Psoas muscle (tissue), 8 donors: ENCODE measurements at regions of chr1 and their contacts with region 1.

Region 1: DNA sequence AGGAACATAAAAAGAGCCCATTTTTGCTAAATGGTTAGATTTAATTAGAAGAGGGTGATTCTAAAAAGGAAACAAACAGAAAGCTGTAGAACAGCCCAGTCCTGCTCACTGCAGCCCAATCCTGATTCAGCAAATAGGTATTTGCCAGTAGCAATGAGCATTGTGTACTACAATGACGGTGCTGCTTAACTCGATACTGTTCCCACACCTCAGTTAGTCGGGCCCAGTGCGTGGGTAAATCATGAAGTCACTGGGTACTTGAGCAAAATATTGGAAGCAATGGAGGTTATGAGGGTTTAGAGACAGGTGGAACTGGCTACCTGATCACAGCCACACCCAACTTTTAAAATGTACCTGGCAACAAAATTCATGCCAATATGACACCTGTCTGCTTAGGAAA is 101.5 kb upstream of the ADGRL2 start:
- DNase-seq: no peak
- ATAC-seq: no peak
- H3K4me3 ChIP-seq: no peak overlapping the region
- H3K27ac ChIP-seq: no peak overlapping the region
- H3K4me1 ChIP-seq: no peaks in the 10 kb centered on the region
- H3K27me3 ChIP-seq: no peaks in the 10 kb centered on the region
- CTCF ChIP-seq: no peak

Region 2: DNA sequence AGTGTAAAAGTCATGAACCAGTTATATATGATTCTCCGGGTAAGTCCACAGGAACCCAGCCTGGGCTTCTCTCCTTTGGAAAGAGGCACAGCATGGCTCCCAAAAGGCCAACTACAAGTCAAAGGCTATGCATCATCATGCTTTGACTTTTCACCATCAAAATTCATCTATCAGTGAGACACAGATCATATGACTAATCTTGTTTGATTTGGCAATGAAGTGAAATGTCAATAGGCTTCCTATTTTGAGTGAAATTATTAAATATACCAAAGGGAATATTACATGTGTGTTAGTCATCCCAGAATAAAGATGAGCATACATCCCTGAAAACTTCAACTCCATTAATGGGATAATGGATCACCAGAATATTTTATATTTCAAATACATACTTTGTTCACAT is 18.0 kb after region 1 on chr1:
- intact Hi-C with region 1: loop called in 1 of 2 experiments (anchors 2 kb)
- DNase-seq: no peak
- ATAC-seq: no peak
- H3K4me3 ChIP-seq: no peak overlapping the region
- H3K27ac ChIP-seq: no peak overlapping the region
- H3K4me1 ChIP-seq: no peaks in the 10 kb centered on the region
- H3K27me3 ChIP-seq: no peaks in the 10 kb centered on the region
- CTCF ChIP-seq: no peak

Region 3: GRCh38 chr1:81808760-81809159 is 109.5 kb after region 1 on chr1:
- intact Hi-C with region 1: no loop called
- DNase-seq: no peak
- ATAC-seq: no peak
- H3K4me3 ChIP-seq: peak overlapping the region; percentile 0
- H3K27ac ChIP-seq: peak overlapping the region; percentile 1
- H3K4me1 ChIP-seq: peaks cover 9% of the 10 kb centered on the region
- H3K27me3 ChIP-seq: peaks cover 0 to 18% (median 0%) of the 10 kb centered on the region in 3 donors
- CTCF ChIP-seq: peak; percentile 11